ENCODE measurements at regions of chr1 and their contacts with region 1.

Region 1: GRCh38 chr1:221829327-221830015 is 87.6 kb upstream of the DUSP10 start:
- DNase-seq: no peak
- ATAC-seq: peak; percentile 81
- H3K4me3 Mint-ChIP-seq: peak overlapping the region; percentile 82
- H3K27ac Mint-ChIP-seq: peak overlapping the region; percentile 97
- H3K4me1 Mint-ChIP-seq: peaks cover 72% of the 10 kb centered on the region
- H3K27me3 Mint-ChIP-seq: no peaks in the 10 kb centered on the region

Region 2: GRCh38 chr1:221783936-221784335 is 45.5 kb before region 1 on chr1:
- POLR2A ChIA-PET with region 1: interaction called, 18 read pairs
- DNase-seq: no peak
- ATAC-seq: peak; percentile 80
- H3K4me3 Mint-ChIP-seq: peak overlapping the region; percentile 77
- H3K27ac Mint-ChIP-seq: peak overlapping the region; percentile 73
- H3K4me1 Mint-ChIP-seq: peaks cover 53% of the 10 kb centered on the region
- H3K27me3 Mint-ChIP-seq: no peaks in the 10 kb centered on the region

Region 3: GRCh38 chr1:221868593-221869303 is 39.3 kb after region 1 on chr1:
- POLR2A ChIA-PET with region 1: no interaction called
- DNase-seq: no peak
- ATAC-seq: no peak
- H3K4me3 Mint-ChIP-seq: no peak overlapping the region
- H3K27ac Mint-ChIP-seq: no peak overlapping the region
- H3K4me1 Mint-ChIP-seq: no peaks in the 10 kb centered on the region
- H3K27me3 Mint-ChIP-seq: peaks cover 3% of the 10 kb centered on the region